Heart right ventricle (tissue), 16 donors: ENCODE measurements at regions of chr12 and their contacts with region 1.

Region 1: DNA sequence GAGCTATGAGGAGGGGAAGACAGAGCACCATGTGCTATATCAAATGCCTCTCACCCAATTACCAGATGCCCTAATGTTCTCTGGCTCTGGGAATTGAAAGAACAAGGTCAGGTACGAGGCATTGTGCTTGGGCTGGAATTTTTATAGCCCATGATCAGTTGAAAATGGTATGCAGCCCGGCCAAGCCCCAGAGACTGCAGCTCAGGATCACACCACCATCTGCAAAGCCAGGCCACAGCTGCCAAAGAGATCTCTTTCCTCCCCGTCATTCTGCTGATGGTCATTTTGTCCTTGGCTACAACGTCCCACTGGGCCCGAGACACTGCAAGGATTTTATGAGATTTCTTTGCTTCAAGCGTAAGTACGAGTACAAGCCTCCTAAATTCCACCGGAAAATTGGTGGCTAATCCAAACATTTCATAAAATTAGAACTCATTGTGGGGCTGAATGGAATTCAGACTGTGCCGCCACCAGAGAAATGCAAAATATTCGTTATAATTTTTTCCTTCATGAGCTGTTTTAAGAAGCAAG is 15.1 kb downstream of the NUAK1 start:
- DNase-seq: peak; percentile 60 to 83
- ATAC-seq: peak; percentile 70 to 91 (median 81)
- H3K4me3 ChIP-seq: peak overlapping the region in 9 of 10 donors; percentile 6 to 46 (median 38)
- H3K27ac ChIP-seq: peak overlapping the region; percentile 77 to 100 (median 86)
- H3K4me1 ChIP-seq: peaks cover 22 to 100% (median 91%) of the 10 kb centered on the region in 9 donors
- H3K27me3 ChIP-seq: no peaks in the 10 kb centered on the region
- CTCF ChIP-seq: no peak

Region 2: DNA sequence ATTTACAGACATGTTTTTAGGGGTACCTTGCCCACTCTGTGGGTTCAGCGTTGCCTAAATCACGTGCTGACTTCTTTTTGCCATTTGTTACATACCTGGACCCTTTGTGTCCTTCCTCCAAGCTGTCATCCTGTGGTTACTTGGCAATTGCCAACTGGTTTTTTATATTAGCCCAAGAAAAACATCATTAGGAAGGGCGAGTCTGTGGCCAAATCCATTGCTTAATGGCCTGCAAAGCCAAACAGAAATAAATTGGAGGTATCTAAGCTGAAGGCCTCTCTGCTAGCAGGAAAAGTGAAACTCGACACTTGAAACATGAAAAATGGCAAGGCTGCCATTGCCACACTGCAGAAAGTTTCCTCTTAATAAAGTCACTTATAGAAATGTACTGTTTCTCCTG is 175.3 kb before region 1 on chr12:
- intact Hi-C with region 1: loop called in 1 of 10 experiments (anchors 10 kb)
- DNase-seq: no peak
- ATAC-seq: no peak
- H3K4me3 ChIP-seq: no peak overlapping the region
- H3K27ac ChIP-seq: peak overlapping the region in 5 of 10 donors; percentile 18 to 78 (median 38)
- H3K4me1 ChIP-seq: peaks cover 0 to 37% (median 4%) of the 10 kb centered on the region in 9 donors
- H3K27me3 ChIP-seq: no peaks in the 10 kb centered on the region
- CTCF ChIP-seq: no peak

Region 3: GRCh38 chr12:106084014-106084671 is 39.5 kb before region 1 on chr12:
- intact Hi-C with region 1: loop called in 1 of 10 experiments (anchors 5 kb)
- DNase-seq: no peak
- ATAC-seq: no peak
- H3K4me3 ChIP-seq: no peak overlapping the region
- H3K27ac ChIP-seq: peak overlapping the region in 6 of 10 donors; percentile 4 to 84 (median 42)
- H3K4me1 ChIP-seq: peaks cover 21 to 83% (median 62%) of the 10 kb centered on the region in 9 donors
- H3K27me3 ChIP-seq: no peaks in the 10 kb centered on the region
- CTCF ChIP-seq: no peak

Region 4: DNA sequence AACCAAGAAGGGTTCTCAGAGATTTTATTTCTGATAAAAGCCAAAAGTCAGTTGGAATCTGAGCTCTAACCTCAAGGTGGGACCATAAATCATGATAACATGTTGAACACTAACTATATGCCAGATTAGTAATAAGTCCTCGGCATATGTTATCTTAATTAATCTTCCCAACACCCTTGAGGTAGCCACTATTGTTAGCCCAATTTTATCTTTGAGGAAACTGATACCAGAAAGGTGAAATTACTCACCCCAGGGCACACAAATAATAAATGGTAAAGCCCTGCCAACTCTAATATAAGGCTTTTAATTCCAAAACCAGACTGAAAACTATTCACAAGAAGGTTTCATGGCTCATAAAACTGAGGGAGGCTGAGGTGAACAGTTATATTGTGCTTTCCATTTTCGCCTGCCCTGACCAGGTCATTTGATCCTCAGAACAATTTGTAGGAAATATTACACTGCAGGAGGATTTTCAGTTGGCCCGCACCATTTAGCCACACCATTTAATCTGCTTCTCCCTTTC is 31.2 kb after region 1 on chr12:
- intact Hi-C with region 1: no loop called
- DNase-seq: no peak
- ATAC-seq: no peak
- H3K4me3 ChIP-seq: no peak overlapping the region
- H3K27ac ChIP-seq: no peak overlapping the region
- H3K4me1 ChIP-seq: peaks cover 0 to 4% (median 0%) of the 10 kb centered on the region in 9 donors
- H3K27me3 ChIP-seq: no peaks in the 10 kb centered on the region
- CTCF ChIP-seq: no peak